ENCODE measurements at regions of chr17 and their contacts with region 1.

Region 1: GRCh38 chr17:74987418-74987908 is at the start of gene CDR2L:
- DNase-seq: peak; percentile 98
- H3K4me3 ChIP-seq: peak within 1 kb of the TSS; percentile 80 to 93
- H3K27ac ChIP-seq: peak within 1 kb of the TSS; percentile 92
- H3K4me1 ChIP-seq: peaks cover 6 to 35% of the 10 kb centered on the region in 2 experiments; a peak in 2 of 4 replicates
- H3K27me3 ChIP-seq: no peaks in the 10 kb centered on the region
- CTCF ChIP-seq: no peak
- EP300 ChIP-seq: no peak; a peak in 1 of 4 replicates
- RAD21 ChIP-seq: no peak
- polyA plus RNA-seq, gene CDR2L: 18.6 and 21.2 TPM in 2 replicates

Region 2: GRCh38 chr17:74972107-74972972 is 15.1 kb before region 1 on chr17 and contains the start of gene HID1:
- CTCF ChIA-PET with region 1: interaction called, 78 read pairs
- POLR2A ChIA-PET with region 1: interaction called, 65 read pairs
- DNase-seq: peak; percentile 96
- H3K4me3 ChIP-seq: peak within 1 kb of the TSS; percentile 54 to 70
- H3K27ac ChIP-seq: peak within 1 kb of the TSS in 1 of 2 experiments; percentile 85; a peak in 2 of 4 replicates
- H3K4me1 ChIP-seq: peaks cover 0 to 22% of the 10 kb centered on the region in 2 experiments; a peak in 1 of 4 replicates
- H3K27me3 ChIP-seq: peaks cover 26% of the 10 kb centered on the region
- CTCF ChIP-seq: no peak
- EP300 ChIP-seq: no peak
- RAD21 ChIP-seq: no peak
- polyA plus RNA-seq, gene HID1: 2.5 and 2.9 TPM in 2 replicates

Region 3: DNA sequence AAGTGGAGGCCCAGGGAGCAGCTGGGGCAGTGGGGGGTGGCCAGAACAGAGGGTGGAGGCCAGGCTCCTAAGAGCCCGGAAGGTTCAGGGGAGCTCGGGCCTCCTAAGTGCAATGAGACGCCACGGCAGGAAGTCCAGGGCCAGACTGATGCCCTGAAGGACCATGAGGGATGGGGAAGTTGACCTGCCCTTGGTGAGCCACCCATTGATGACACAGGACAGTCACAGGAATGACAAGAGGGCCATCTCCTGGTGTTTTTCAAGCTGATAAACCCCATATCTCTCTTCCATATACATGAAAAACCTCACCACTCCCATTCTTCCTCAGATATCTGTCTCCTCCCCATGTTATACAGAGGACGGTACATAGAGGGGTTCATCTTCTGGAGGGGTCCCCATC is 19.2 kb after region 1 on chr17:
- CTCF ChIA-PET with region 1: interaction called, 136 read pairs
- POLR2A ChIA-PET with region 1: interaction called, 197 read pairs
- DNase-seq: no peak
- H3K4me3 ChIP-seq: no peak overlapping the region
- H3K27ac ChIP-seq: no peak overlapping the region
- H3K4me1 ChIP-seq: peaks cover 4 to 15% of the 10 kb centered on the region in 2 experiments; a peak in 3 of 4 replicates
- H3K27me3 ChIP-seq: no peaks in the 10 kb centered on the region
- CTCF ChIP-seq: no peak
- EP300 ChIP-seq: no peak
- RAD21 ChIP-seq: peak; percentile 60

Region 4: GRCh38 chr17:75034236-75034908 is 46.9 kb after region 1 on chr17:
- CTCF ChIA-PET with region 1: interaction called, 4 read pairs
- POLR2A ChIA-PET with region 1: interaction called, 23 read pairs
- DNase-seq: peak; percentile 81
- H3K4me3 ChIP-seq: peak overlapping the region; percentile 67 to 98
- H3K27ac ChIP-seq: peak overlapping the region; percentile 90 to 92
- H3K4me1 ChIP-seq: peaks cover 0 to 22% of the 10 kb centered on the region in 2 experiments; a peak in 1 of 4 replicates
- H3K27me3 ChIP-seq: no peaks in the 10 kb centered on the region
- CTCF ChIP-seq: peak; percentile 49
- EP300 ChIP-seq: peak in 1 of 2 experiments; percentile 12; a peak in 1 of 4 replicates
- RAD21 ChIP-seq: no peak

Region 5: GRCh38 chr17:75405365-75406221 is 418.1 kb after region 1 on chr17 and contains the start of gene GRB2:
- CTCF ChIA-PET with region 1: no interaction called
- POLR2A ChIA-PET with region 1: no interaction called
- DNase-seq: peak; percentile 100
- H3K4me3 ChIP-seq: peak within 1 kb of the TSS; percentile 82 to 86
- H3K27ac ChIP-seq: peak within 1 kb of the TSS; percentile 69 to 70
- H3K4me1 ChIP-seq: peaks cover 4 to 6% of the 10 kb centered on the region in 2 experiments; a peak in 3 of 4 replicates
- H3K27me3 ChIP-seq: no peaks in the 10 kb centered on the region; the same call in 1 of the 2 replicates
- CTCF ChIP-seq: no peak
- EP300 ChIP-seq: no peak; a peak in 1 of 4 replicates
- RAD21 ChIP-seq: no peak
- polyA plus RNA-seq, gene GRB2: 81.6 and 89.6 TPM in 2 replicates